Prostate gland (tissue), 2 donors: ENCODE measurements at regions of chr4 and their contacts with region 1.

Region 1: GRCh38 chr4:56655209-56655626 is 25.9 kb downstream of the HOPX start:
- DNase-seq: no peak
- H3K4me3 ChIP-seq: peak overlapping the region; percentile 39 to 47
- H3K27ac ChIP-seq: peak overlapping the region; percentile 65 to 66
- H3K4me1 ChIP-seq: peaks cover 8% of the 10 kb centered on the region
- H3K27me3 ChIP-seq: no peaks in the 10 kb centered on the region
- CTCF ChIP-seq: no peak
- POLR2A ChIP-seq: no peak

Region 2: DNA sequence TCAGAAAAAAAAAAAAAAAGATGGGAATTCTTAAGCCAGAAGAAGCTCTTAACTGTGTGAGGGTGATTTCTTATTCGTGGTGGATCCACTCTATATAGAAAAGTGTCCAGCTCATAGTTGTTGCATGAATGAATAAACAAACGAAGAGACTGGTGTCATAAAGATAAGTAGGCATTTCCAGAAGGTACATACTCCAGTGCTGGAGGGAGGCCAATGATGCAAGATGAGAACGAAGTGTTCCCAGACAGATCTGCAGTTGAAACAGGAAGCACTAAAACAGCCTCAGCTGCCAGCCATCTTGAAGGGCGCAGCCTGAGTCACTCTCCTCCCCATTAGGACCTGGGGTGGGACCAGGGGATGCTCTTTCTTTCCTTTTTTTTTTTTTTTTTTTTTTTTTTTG is 73.3 kb after region 1 on chr4:
- intact Hi-C with region 1: loop called (anchors 5 kb)
- DNase-seq: peak; percentile 93
- H3K4me3 ChIP-seq: no peak overlapping the region
- H3K27ac ChIP-seq: peak overlapping the region; percentile 11 to 29
- H3K4me1 ChIP-seq: no peaks in the 10 kb centered on the region
- H3K27me3 ChIP-seq: peaks cover 7% of the 10 kb centered on the region
- CTCF ChIP-seq: no peak
- POLR2A ChIP-seq: no peak

Region 3: DNA sequence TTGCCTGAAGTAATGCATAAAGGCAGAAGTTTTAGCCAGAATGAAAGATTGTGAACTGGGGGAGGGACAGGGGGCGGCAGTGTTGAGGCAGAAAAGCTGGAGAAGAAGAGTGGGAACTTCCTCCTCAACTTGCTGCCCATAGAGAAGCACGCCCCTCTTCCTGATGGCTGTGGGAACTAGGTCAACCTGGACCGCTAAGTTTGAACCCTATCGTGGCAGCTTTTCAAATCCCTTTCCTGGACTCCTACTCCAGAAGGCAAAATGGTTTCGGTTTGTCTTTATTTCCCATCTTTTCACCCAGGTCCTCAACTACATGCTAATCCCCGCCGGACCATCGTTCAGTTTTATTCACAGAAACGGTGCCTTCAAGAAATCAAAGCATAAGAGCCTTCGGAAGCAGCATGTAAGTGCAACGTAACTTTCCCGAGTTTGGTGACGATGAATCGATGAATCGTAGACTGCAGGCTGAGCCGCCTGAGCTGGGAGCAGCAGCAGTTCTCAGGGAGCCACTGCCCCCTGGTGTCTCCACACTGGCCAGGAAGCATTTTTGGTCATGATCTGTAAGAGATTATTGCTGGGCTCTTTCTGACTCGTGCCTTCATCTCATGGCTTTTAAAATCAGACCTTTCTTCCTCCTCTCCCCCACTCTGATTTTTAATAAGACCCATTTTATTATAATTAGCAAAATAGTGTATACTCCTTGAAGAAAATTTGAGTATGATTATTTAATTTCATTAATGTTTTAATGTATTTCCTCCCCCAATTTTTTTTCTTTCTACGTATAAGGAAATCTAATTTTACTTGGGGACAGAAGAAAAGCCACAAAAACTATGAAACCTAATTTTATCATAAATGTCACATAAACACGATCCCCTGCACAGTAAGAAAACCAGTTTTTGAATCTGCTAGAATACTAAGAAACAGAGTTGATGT is 144.9 kb after region 1 on chr4:
- intact Hi-C with region 1: loop called (anchors 5 kb)
- DNase-seq: peak; percentile 84
- H3K4me3 ChIP-seq: peak overlapping the region; percentile 32 to 53
- H3K27ac ChIP-seq: peak overlapping the region; percentile 57 to 71
- H3K4me1 ChIP-seq: no peaks in the 10 kb centered on the region
- H3K27me3 ChIP-seq: no peaks in the 10 kb centered on the region
- CTCF ChIP-seq: peak in 3 of 4 experiments; percentile 87 to 93 (median 89)
- POLR2A ChIP-seq: no peak